PC-3 (cell line): ENCODE measurements at regions of chr3 and their contacts with region 1.

Region 1: DNA sequence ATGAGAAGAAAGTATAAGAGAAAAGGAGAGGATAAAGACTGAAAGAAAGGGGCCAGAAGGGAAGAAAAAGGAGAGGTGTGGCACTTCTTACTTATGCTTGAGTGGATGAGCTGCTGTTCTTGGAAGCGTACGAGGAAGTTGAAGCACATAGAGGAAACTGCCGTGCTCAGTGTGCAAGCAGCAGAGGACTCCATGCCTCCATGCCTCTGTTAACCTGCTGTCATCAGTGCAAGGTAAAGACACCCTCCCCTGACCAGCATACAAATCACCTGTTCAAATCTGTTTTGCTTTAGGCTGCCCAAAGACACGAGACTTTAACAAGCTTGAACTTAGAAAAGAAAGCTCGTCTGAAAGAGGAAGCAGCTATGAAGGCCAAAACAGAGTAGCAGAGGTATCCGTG is 6.4 kb downstream of the WDR5B start:
- DNase-seq: no peak
- ATAC-seq: no peak
- H3K4me3 ChIP-seq: no peak overlapping the region
- H3K27ac ChIP-seq: no peak overlapping the region
- H3K4me1 ChIP-seq: peaks cover 10% of the 10 kb centered on the region
- H3K27me3 ChIP-seq: no peaks in the 10 kb centered on the region
- CTCF ChIP-seq: no peak

Region 2: DNA sequence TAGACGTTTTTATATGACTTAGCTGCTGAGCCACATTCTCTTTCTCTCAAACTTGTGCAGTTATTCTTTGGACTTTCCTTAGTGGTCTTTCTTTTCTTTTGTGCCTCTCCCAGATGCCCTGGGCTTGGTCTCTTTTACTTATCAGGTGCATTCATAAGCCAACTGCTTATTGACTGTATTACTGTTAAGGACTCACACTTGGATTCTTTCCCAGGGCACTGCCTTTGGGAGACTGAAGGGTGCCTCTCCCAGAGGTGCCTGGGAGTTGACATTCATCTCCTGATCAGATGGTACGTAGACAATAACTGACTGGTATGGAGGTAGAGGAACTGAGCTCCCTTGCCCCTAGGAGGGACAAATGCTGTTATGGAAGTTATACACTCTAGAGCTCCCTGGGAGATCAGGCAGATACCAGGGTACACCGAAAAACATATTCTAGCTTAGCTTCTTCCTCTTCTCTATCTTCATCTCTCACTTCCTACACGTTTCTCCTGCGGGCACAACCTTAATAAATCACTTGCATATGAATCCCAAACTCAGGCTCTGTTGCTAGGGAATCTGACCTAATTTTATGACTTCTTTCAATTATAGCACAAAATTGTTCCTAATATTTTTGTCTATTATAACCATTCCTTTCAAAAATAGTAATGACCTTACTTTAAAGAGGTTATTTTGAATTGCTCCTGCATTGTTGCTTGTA is 192.7 kb after region 1 on chr3:
- CTCF ChIA-PET with region 1: no interaction called
- POLR2A ChIA-PET with region 1: interaction called, 23 read pairs
- intact Hi-C with region 1: no loop called
- DNase-seq: no peak
- ATAC-seq: no peak
- H3K4me3 ChIP-seq: no peak overlapping the region
- H3K27ac ChIP-seq: no peak overlapping the region
- H3K4me1 ChIP-seq: 0 out of 2 replicates have a peak, but pooled peaks cover 4% of the 10 kb centered on the region
- H3K27me3 ChIP-seq: no peaks in the 10 kb centered on the region
- CTCF ChIP-seq: no peak

Region 3: GRCh38 chr3:122662505-122662904 is 253.1 kb after region 1 on chr3:
- CTCF ChIA-PET with region 1: no interaction called
- POLR2A ChIA-PET with region 1: interaction called, 12 read pairs
- intact Hi-C with region 1: no loop called
- DNase-seq: no peak
- ATAC-seq: no peak
- H3K4me3 ChIP-seq: no peak overlapping the region
- H3K27ac ChIP-seq: no peak overlapping the region
- H3K4me1 ChIP-seq: no peaks in the 10 kb centered on the region
- H3K27me3 ChIP-seq: no peaks in the 10 kb centered on the region
- CTCF ChIP-seq: no peak